ENCODE measurements at regions of chr6 and their contacts with region 1.

Region 1: DNA sequence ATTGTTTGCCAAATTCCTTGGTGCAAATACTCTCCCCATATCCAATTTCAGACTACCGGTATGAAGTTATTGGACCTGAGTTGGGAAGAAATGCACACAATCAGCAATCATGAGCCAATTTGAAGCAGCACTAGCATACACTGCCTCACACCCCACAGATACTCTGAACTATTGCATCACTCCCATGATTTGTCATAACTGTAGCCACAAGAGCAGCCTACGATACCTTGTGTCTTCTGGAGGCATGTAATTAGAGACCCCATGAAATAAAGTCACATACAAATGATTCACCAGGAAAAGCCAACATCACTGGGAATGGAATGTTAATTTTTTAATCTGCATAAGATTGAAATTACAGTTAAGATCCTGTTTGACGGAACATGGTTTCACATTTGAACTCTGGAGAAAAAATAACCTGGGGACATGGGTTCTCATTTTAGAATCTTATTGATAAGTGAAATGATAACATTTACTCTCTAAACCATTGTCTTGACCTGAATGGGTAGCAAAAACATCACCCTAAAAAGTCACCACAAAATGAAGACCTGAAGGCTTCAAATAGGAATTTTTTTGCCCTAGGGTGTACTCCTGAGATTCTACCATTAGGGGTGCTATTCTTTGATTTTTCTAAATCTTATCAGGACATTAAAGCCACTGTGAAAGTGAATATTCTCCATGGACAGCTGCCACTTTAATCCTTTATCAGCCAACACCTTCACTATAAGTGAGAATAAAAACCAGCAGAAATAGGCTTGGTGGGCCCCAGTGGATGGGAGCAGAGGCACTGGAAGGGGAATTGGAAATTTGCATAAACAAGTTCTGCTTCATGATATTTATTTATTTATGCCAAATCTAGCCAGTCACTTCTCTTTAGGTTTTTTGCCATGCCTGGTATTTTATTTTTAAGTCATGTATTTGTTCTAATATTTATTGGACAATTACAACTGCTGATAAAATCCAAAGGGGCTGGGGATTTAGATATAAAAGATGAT is 34.5 kb upstream of the HBS1L start:
- DNase-seq: peak; percentile 56
- H3K4me3 Mint-ChIP-seq: peak overlapping the region; percentile 64
- H3K27ac Mint-ChIP-seq: peak overlapping the region; percentile 91
- H3K4me1 Mint-ChIP-seq: peaks cover 82% of the 10 kb centered on the region
- H3K27me3 Mint-ChIP-seq: no peaks in the 10 kb centered on the region

Region 2: GRCh38 chr6:134921721-134922261 is 167.3 kb before region 1 on chr6:
- CTCF ChIA-PET with region 1: no interaction called
- POLR2A ChIA-PET with region 1: no interaction called
- DNase-seq: no peak
- H3K4me3 Mint-ChIP-seq: no peak overlapping the region
- H3K27ac Mint-ChIP-seq: no peak overlapping the region
- H3K4me1 Mint-ChIP-seq: no peaks in the 10 kb centered on the region
- H3K27me3 Mint-ChIP-seq: no peaks in the 10 kb centered on the region

Region 3: GRCh38 chr6:135054569-135055498 is 34.3 kb before region 1 on chr6 and contains the start of gene HBS1L:
- CTCF ChIA-PET with region 1: interaction called, 20 read pairs
- POLR2A ChIA-PET with region 1: interaction called, 5 read pairs
- DNase-seq: peak; percentile 97
- H3K4me3 Mint-ChIP-seq: peak within 1 kb of the TSS; percentile 90
- H3K27ac Mint-ChIP-seq: peak within 1 kb of the TSS; percentile 96
- H3K4me1 Mint-ChIP-seq: peaks cover 43% of the 10 kb centered on the region
- H3K27me3 Mint-ChIP-seq: no peaks in the 10 kb centered on the region
- total RNA-seq, gene HBS1L: 71.5 to 74.7 TPM

Region 4: GRCh38 chr6:135075018-135075417 is 14.1 kb before region 1 on chr6:
- CTCF ChIA-PET with region 1: interaction called, 20 read pairs
- POLR2A ChIA-PET with region 1: no interaction called
- DNase-seq: no peak
- H3K4me3 Mint-ChIP-seq: no peak overlapping the region
- H3K27ac Mint-ChIP-seq: no peak overlapping the region
- H3K4me1 Mint-ChIP-seq: peaks cover 7% of the 10 kb centered on the region
- H3K27me3 Mint-ChIP-seq: no peaks in the 10 kb centered on the region